B cell (primary cell): ENCODE measurements at regions of chr11 and their contacts with region 1.

Region 1: DNA sequence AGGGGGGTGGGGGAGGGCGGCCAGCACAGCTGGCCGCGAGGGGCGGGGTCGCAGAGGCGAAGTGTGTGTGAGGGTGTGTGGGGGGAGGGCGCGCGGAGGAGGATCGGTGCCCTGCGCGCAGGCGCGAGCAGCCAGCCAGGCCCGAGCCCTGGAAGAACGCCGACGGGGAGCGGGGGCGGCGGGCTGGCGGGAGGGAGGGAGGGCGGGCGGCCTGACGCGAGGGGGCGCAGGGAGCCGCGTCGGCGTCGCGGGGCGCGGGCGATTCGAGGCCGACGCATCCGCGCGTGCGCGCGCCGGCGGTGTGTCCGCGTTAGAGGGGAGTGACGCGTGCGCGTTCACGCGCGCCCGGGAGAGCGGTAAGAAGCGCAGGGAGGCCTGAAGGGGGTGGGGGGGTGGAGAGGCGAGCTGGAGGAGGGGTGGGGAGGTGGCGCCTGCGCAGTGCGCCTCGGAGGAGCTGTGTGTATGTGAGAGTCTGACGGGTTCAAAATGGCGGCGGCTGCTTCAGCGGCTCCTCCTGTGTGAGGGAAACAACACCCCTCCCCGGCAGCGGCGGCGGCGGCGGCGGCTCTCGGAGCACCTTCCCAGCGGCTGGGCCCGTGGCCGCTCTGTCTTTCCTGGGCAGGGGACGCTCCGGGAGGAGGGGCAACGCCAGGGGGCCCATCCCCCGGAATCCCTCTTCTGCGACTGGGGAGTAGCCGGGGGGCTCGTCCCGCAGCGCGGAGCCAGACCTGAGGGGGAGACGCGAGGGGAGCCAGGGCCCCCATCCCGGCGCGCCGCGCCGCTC is at the start of gene KDM2A:
- DNase-seq: peak; percentile 100
- ATAC-seq: peak; percentile 77
- H3K4me3 ChIP-seq: peak within 1 kb of the TSS; percentile 73 to 96 (median 89)
- H3K4me3 Mint-ChIP-seq: peak within 1 kb of the TSS; percentile 95
- H3K27ac ChIP-seq: peak within 1 kb of the TSS; percentile 79 to 81
- H3K27ac Mint-ChIP-seq: peak within 1 kb of the TSS; percentile 89
- H3K4me1 ChIP-seq: peaks cover 13 to 36% of the 10 kb centered on the region in 2 donors
- H3K4me1 Mint-ChIP-seq: peaks cover 38% of the 10 kb centered on the region
- H3K27me3 ChIP-seq: no peaks in the 10 kb centered on the region
- H3K27me3 Mint-ChIP-seq: no peaks in the 10 kb centered on the region
- CTCF ChIP-seq: peak; percentile 41
- total RNA-seq, gene KDM2A: 229 and 243 TPM in 2 replicates

Region 2: DNA sequence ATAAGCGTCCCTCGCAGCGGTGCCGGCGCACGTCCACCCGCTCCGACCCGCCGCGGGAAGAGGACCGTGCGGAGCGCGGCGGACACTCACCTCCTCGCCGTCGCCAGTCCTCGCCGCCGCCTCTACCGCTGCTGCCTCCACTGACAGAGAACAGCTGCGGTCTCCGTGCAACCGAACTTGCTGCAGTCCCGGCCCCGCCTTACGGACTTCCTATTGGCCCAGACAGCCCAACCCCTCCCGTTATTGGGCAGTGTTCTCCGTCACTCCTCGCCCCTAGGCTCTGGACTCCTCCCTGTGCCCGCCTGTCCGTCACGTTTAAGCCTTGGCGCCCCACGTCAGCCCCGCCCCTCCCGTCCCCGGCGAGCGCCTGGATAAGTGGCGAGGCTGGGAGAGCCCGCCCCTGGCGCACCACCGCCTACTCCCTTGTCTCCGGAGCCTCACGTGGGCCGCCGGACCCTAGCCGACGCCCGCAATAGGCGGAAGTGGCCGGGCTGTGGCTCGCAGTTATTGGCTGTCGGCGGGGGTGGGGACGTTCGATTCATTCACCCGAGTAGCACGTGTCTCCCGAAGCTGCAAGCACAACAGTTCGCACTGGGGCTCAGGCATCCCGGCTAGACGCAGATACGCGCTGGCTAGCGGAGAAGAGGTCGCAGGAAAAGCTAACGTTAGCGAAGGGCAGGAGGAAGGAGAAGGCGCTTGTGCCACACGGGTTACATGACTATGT is 160.6 kb before region 1 on chr11 and contains the start of gene PC:
- CTCF ChIA-PET with region 1: no interaction called
- POLR2A ChIA-PET with region 1: no interaction called
- intact Hi-C with region 1: loop called (anchors 2 kb)
- DNase-seq: peak; percentile 97
- ATAC-seq: peak; percentile 96
- H3K4me3 ChIP-seq: peak within 1 kb of the TSS; percentile 44 to 78 (median 52)
- H3K4me3 Mint-ChIP-seq: peak within 1 kb of the TSS; percentile 89
- H3K27ac ChIP-seq: peak within 1 kb of the TSS in 1 of 2 donors; percentile 44
- H3K27ac Mint-ChIP-seq: peak within 1 kb of the TSS; percentile 86
- H3K4me1 ChIP-seq: peaks cover 12 to 22% of the 10 kb centered on the region in 2 donors
- H3K4me1 Mint-ChIP-seq: peaks cover 18% of the 10 kb centered on the region
- H3K27me3 ChIP-seq: peaks cover 0 to 4% (median 1%) of the 10 kb centered on the region in 4 experiments
- H3K27me3 Mint-ChIP-seq: no peaks in the 10 kb centered on the region
- CTCF ChIP-seq: no peak
- total RNA-seq, gene PC: 2.6 and 4.4 TPM in 2 replicates

Region 3: DNA sequence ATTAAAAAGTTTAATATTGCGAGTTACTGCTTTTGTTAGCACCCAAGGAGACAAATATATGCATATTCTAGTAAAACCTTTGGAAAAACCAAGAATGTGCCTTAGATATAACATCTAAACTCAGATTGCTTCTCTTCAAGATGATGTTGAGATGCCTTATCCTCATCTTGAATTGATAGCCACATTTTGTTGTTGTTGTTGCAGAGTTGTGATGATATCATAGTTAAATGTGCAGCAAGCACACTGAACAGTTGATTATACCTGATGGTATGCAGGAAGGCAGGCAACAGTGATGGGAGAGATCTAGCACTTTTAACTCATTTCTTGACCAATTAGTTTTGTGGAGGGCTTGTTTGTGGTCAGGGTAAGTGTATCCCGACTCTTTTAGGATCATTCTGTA is 48.1 kb after region 1 on chr11:
- CTCF ChIA-PET with region 1: interaction called, 4 read pairs
- POLR2A ChIA-PET with region 1: no interaction called
- intact Hi-C with region 1: loop called (anchors 5 kb)
- DNase-seq: no peak
- ATAC-seq: no peak
- H3K4me3 ChIP-seq: no peak overlapping the region
- H3K4me3 Mint-ChIP-seq: no peak overlapping the region
- H3K27ac ChIP-seq: no peak overlapping the region
- H3K27ac Mint-ChIP-seq: no peak overlapping the region
- H3K4me1 ChIP-seq: peaks cover 4 to 7% of the 10 kb centered on the region in 2 donors
- H3K4me1 Mint-ChIP-seq: peaks cover 43% of the 10 kb centered on the region
- H3K27me3 ChIP-seq: no peaks in the 10 kb centered on the region
- H3K27me3 Mint-ChIP-seq: no peaks in the 10 kb centered on the region
- CTCF ChIP-seq: no peak